ENCODE measurements at regions of chr20 and their contacts with region 1.

Region 1: DNA sequence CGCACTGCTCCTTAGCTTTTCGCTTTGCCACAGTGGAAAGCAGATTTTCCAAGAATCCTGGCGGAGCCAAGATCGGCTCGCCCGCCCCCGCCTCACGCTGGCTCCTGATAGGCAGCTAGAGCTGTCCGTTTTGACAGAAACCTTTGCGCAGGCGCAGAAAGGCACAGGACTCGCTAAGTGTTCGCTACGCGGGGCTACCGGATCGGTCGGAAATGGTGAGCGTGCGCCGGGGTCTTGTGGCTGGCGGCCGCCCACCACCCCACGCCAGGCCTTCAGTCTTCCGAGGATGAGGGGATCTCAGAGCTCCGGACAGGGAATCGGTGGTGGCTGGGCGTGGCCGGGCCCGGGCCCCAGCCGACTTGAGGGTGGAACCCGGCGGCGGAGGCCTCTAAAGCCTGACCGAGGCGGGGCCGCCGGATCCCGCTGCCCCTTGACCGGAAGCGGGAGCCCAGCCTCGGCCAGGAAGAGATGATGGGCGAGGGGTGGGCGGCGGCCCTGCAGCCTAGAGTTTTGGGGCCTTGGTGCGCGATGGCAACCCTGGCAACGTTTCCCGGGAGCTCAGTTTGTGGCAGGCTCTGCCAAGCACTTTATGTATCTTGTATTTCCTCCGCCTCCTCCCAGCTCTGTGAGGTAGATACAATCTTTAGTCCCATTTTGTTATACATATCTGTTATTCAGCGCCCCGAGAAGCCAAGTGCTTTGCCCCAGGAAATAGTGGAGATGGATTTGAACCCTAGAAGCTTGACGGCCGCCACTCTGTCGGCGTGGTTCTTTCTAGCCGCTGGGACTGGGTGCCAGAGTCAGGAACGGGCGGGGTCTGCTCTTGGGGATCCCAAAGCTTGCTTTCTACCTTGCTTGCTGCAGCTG is at the start of gene DYNLRB1:
- DNase-seq: peak; percentile 88 to 98 (median 94)
- ATAC-seq: peak; percentile 79 to 87
- H3K4me3 Mint-ChIP-seq: peak within 1 kb of the TSS; percentile 97 to 100 (median 99)
- H3K27ac Mint-ChIP-seq: peak within 1 kb of the TSS; percentile 96 to 99 (median 98)
- H3K4me1 Mint-ChIP-seq: peaks cover 25 to 67% (median 40%) of the 10 kb centered on the region in 4 donors
- H3K27me3 Mint-ChIP-seq: no peaks in the 10 kb centered on the region
- polyA plus RNA-seq, gene DYNLRB1: 216 to 275 (median 268) TPM

Region 2: GRCh38 chr20:34363062-34363464 is 153.4 kb before region 1 on chr20 and contains the start of gene ITCH:
- POLR2A ChIA-PET with region 1: interaction called, 11 read pairs
- DNase-seq: peak; percentile 83 to 95 (median 88)
- ATAC-seq: peak; percentile 98 to 99
- H3K4me3 Mint-ChIP-seq: peak within 1 kb of the TSS; percentile 84 to 100 (median 100)
- H3K27ac Mint-ChIP-seq: peak within 1 kb of the TSS; percentile 97 to 100 (median 98)
- H3K4me1 Mint-ChIP-seq: peaks cover 18 to 50% (median 41%) of the 10 kb centered on the region in 4 donors
- H3K27me3 Mint-ChIP-seq: no peaks in the 10 kb centered on the region
- polyA plus RNA-seq, gene ITCH: 12.6 to 19.6 (median 12.8) TPM